ENCODE measurements at regions of chr20 and their contacts with region 1.

Region 1: DNA sequence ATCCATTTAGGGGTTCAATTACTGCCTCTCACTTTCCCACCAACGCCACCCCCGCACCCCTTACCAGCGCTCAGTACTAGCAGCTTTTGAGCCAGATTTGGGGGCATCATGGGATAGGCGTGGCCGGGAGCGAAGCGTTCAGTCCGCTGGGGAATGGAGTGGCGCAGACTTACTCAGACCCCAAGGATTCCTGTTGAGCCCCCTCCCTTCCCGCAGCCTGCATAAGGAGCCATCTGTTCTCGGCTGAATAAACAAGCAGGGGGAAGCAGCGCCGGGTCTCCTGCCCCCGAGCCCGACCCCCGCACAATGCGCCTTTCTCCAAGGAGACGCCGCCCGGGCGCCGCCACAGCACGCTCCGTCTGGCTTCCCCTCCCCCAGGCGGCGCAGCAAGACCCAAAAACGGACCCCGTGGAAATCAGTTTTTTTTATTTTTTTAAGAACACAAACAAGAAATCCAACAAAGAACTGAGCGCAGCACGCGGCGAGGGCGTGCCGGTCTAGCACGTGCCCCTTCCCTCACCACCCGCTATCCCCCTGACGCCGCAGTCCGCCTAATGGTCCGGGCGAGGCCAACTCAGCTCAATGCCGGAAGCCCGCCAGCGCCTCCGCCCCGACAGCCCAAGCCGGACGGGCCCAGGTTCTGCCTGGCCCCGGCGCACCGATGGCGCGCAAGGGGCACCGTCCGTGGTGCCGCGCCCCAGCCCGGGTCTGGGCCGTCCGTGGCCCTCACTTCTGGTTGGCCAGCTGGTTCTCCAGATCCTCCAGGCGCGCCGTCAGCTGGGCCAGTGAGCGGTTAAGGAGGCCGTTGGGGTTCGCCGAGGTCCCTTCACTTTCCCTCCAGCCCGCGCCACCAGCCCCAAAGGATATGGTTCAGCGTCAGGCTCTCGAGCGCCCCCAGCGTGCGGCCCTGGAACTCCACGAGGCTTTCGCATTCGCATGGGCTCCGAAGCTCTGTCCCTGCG is 13.3 kb upstream of the RBPJL start:
- DNase-seq: peak; percentile 43 to 87 (median 79)
- H3K4me3 ChIP-seq: peak overlapping the region; percentile 49 to 79 (median 65)
- H3K27ac ChIP-seq: peak overlapping the region in 44 of 59 donors; percentile 3 to 82 (median 52)
- H3K27me3 ChIP-seq: peaks cover 0 to 4% (median 0%) of the 10 kb centered on the region in 45 donors
- CTCF ChIP-seq: peak; percentile 65 to 95 (median 90)

Region 2: DNA sequence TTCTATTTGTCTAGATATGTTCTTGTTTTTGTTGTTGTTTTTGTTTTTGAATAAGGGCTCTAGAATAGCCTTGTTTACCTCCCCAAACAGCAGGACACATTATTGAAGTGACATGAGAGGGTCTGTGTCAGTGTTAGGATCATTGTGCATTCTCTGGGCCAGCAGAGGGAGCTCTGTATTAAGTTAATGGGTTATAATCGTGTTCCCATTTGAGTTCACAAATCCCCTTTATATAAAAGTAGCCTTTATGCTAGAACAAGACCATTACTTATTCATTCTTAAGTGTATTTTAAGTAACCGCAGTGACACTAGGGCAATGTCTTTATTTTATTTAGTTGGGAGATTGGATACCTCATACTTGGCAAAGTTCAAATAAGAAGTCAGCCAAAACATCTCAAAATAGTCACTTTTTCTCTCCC is 282.2 kb before region 1 on chr20:
- intact Hi-C with region 1: loop called (anchors 5 kb)
- DNase-seq: peak in 6 of 10 donors; percentile 47 to 84 (median 56)
- H3K4me3 ChIP-seq: no peak overlapping the region
- H3K27ac ChIP-seq: peak overlapping the region in 41 of 59 donors; percentile 1 to 73 (median 43)
- H3K27me3 ChIP-seq: no peaks in the 10 kb centered on the region
- CTCF ChIP-seq: peak; percentile 63 to 95 (median 85)

Region 3: GRCh38 chr20:45044084-45044573 is 249.2 kb before region 1 on chr20:
- intact Hi-C with region 1: loop called in 1 of 2 experiments (anchors 10 kb)
- DNase-seq: peak in 1 of 10 donors; percentile 50
- H3K4me3 ChIP-seq: peak overlapping the region in 1 of 59 donors; percentile 12
- H3K27ac ChIP-seq: peak overlapping the region in 12 of 59 donors; percentile 26 to 62 (median 45)
- H3K27me3 ChIP-seq: no peaks in the 10 kb centered on the region
- CTCF ChIP-seq: peak; percentile 72 to 98 (median 91)

Region 4: DNA sequence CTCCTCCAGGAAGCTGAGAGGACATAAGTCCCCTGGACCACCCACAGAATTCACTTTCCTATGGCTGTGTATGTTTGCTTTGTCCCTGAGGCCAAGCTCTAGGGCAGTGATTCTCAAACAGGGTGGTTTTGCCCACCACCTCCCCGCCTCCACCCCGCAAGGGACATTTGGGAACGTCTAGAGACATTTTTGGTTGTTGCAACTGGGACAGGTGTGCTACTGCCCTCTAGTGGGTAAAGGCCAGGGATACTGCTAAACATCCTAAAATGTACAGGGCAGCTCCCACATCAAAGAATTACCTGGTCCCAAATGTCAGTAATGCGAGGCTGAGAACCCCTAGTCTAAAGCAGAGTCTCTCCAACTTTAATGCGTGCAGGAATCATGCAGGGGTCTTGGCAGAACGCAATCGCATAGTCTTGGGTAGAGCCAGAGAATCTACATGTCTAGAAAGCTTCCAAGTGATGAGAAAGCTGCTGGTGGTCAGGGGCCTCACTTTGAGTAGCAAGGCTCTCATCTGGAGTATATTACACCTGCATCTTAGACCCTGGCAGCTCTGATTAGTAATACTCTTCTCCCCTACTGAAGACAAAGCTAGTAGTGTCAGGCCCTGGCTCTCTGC is 197.5 kb before region 1 on chr20:
- intact Hi-C with region 1: loop called (anchors 5 kb)
- DNase-seq: peak in 4 of 10 donors; percentile 29 to 74 (median 52)
- H3K4me3 ChIP-seq: peak overlapping the region in 38 of 59 donors; percentile 2 to 59 (median 24)
- H3K27ac ChIP-seq: peak overlapping the region in 41 of 59 donors; percentile 1 to 81 (median 55)
- H3K27me3 ChIP-seq: peaks cover 0 to 28% (median 12%) of the 10 kb centered on the region in 45 donors
- CTCF ChIP-seq: peak in 55 of 56 donors; percentile 51 to 90 (median 79)

Region 5: GRCh38 chr20:45193331-45193730 is 100.0 kb before region 1 on chr20:
- intact Hi-C with region 1: loop called in 1 of 2 experiments (anchors 5 kb)
- DNase-seq: peak in 1 of 10 donors; percentile 24
- H3K4me3 ChIP-seq: no peak overlapping the region
- H3K27ac ChIP-seq: peak overlapping the region in 47 of 59 donors; percentile 0 to 95 (median 74)
- H3K27me3 ChIP-seq: peaks cover 0 to 4% (median 0%) of the 10 kb centered on the region in 45 donors
- CTCF ChIP-seq: no peak